Activated B cell treated with CpG ODN at 0.5 μM for 24 hours (primary cell): ENCODE measurements at regions of chr18 and their contacts with region 1.

Region 1: GRCh38 chr18:42298759-42299675 is 344.0 kb downstream of the PIK3C3 start:
- DNase-seq: no peak
- ATAC-seq: peak; percentile 47
- H3K4me3 Mint-ChIP-seq: no peak overlapping the region
- H3K27ac Mint-ChIP-seq: no peak overlapping the region
- H3K4me1 Mint-ChIP-seq: no peaks in the 10 kb centered on the region
- H3K27me3 Mint-ChIP-seq: peaks cover 1% of the 10 kb centered on the region
- CTCF ChIP-seq: peak; percentile 75

Region 2: GRCh38 chr18:41938445-41938844 is 360.6 kb before region 1 on chr18:
- CTCF ChIA-PET with region 1: no interaction called
- POLR2A ChIA-PET with region 1: no interaction called
- intact Hi-C with region 1: no loop called
- DNase-seq: no peak
- ATAC-seq: no peak
- H3K4me3 Mint-ChIP-seq: no peak overlapping the region
- H3K27ac Mint-ChIP-seq: no peak overlapping the region
- H3K4me1 Mint-ChIP-seq: peaks cover 3% of the 10 kb centered on the region
- H3K27me3 Mint-ChIP-seq: peaks cover 21% of the 10 kb centered on the region
- CTCF ChIP-seq: no peak

Region 3: GRCh38 chr18:43034683-43035505 is 735.9 kb after region 1 on chr18:
- CTCF ChIA-PET with region 1: no interaction called
- POLR2A ChIA-PET with region 1: no interaction called
- intact Hi-C with region 1: no loop called
- DNase-seq: no peak
- ATAC-seq: no peak
- H3K4me3 Mint-ChIP-seq: no peak overlapping the region
- H3K27ac Mint-ChIP-seq: no peak overlapping the region
- H3K4me1 Mint-ChIP-seq: no peaks in the 10 kb centered on the region
- H3K27me3 Mint-ChIP-seq: no peaks in the 10 kb centered on the region
- CTCF ChIP-seq: no peak

Region 4: GRCh38 chr18:43271593-43272432 is 972.8 kb after region 1 on chr18:
- CTCF ChIA-PET with region 1: interaction called, 9 read pairs
- POLR2A ChIA-PET with region 1: no interaction called
- intact Hi-C with region 1: loop called (anchors 2 kb)
- DNase-seq: no peak
- ATAC-seq: peak; percentile 34
- H3K4me3 Mint-ChIP-seq: no peak overlapping the region
- H3K27ac Mint-ChIP-seq: no peak overlapping the region
- H3K4me1 Mint-ChIP-seq: no peaks in the 10 kb centered on the region
- H3K27me3 Mint-ChIP-seq: peaks cover 3% of the 10 kb centered on the region
- CTCF ChIP-seq: peak; percentile 83